Kidney (tissue), 22 donors: ENCODE measurements at regions of chr7 and their contacts with region 1.

Region 1: DNA sequence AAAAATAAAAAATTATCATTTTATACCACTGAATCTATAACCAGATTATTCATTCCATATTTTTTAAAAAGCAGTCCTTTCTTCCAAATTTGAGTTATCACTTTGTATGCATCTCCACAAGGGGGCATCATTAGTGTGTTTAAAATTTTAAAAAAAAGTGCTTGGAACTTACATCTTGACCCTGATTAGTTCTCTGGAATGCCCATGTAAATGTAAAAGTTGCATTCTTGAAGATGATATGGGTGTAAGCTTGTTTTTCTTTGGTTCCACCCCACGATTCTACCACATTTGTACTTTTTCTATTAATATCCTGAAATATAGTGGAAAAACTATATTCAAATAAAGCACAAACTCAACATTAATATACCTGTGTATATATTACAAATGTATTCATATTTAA is 144.9 kb downstream of the ELAPOR2 start:
- DNase-seq: no peak
- H3K4me3 ChIP-seq: no peak overlapping the region
- H3K27ac ChIP-seq: no peak overlapping the region
- H3K4me1 ChIP-seq: no peaks in the 10 kb centered on the region
- H3K27me3 ChIP-seq: no peaks in the 10 kb centered on the region
- CTCF ChIP-seq: no peak

Region 2: DNA sequence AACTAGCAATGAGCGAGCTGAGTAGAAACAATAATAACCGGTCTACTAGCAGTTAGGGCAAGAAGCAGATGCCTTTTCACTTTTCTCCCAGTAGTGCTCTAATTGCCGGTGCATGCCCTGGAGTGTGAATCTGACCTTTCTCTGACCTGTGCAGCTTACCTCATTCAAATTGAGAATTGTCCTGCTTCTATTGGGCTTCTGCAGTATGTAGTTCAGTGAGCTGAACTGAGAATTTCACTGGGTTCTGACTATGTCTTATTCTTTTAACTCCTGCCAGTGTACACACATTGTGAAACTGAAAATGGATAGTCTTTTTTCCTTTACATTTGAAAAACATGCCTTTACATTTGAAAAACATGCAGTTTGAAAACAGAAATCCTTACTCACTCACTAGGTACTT is 428.7 kb before region 1 on chr7:
- intact Hi-C with region 1: no loop called
- DNase-seq: no peak
- H3K4me3 ChIP-seq: no peak overlapping the region
- H3K27ac ChIP-seq: no peak overlapping the region
- H3K4me1 ChIP-seq: no peaks in the 10 kb centered on the region
- H3K27me3 ChIP-seq: no peaks in the 10 kb centered on the region
- CTCF ChIP-seq: no peak

Region 3: DNA sequence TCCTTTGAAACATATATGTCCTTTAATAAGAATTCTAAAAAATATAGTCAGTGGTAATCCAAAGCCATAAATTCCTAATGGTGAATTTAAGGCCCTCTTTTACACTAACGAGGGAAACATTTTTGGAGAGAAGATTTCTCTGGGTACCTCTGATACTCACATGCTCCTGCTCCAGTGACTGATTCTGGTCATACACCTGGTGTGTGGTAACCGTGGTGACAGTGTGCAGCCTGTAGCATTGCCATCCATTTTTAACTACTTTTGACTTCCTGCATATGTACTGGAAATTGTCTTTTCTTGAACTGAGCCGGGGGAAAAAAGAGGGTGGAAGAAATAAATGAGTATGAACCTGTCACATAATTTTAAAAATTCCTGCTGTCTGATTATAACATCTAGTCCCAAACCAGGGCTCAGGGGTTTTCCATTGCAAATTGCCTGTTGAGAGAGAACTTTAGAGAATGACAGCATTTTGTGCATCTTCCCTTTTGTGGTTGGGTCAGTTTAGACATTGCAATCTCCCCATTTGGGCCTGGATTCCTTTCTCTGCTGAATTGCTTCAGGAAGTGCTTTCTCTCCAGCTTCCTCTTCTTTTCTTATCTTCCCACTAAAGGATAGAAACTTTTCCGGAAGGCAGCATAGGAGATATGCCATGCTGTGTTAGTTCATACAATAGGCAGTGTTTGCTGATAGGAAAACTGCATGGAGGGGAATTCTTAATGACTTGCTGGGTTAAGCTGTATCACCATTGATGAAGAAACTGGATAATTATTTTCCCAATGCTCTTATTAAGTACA is 145.4 kb before region 1 on chr7:
- intact Hi-C with region 1: no loop called
- DNase-seq: no peak
- H3K4me3 ChIP-seq: no peak overlapping the region
- H3K27ac ChIP-seq: no peak overlapping the region
- H3K4me1 ChIP-seq: no peaks in the 10 kb centered on the region
- H3K27me3 ChIP-seq: no peaks in the 10 kb centered on the region
- CTCF ChIP-seq: no peak

Region 4: DNA sequence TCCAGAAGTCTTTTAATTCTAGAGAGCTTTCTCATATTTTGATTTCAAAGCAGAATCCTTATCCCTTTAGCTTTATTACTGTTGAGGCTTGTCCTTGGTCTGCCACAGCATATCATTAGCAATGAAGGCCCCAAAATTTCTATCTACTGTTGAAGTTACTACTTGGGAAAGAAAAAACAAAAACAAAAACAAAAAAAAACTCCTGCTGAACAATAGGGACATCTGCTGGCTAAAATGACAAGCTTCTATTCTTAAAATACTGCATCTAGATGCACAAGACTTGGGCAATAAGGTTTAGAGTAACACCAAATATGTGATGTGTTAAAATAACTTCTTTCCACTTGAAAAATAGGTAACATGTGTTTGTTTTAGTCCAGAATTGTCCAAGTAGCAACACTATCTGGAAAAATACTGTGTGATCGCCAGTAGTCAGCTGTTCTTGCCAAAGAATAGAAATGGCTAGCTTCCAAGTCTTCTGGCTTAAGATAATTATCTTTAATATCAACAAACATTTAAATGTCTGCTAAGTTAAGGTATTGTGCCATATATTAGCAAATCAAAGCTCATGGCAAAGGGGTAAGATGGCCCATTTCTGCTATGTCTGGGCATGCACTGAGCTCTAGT is 233.9 kb after region 1 on chr7:
- intact Hi-C with region 1: loop called (anchors 10 kb)
- DNase-seq: peak in 2 of 5 donors; percentile 17 to 27
- H3K4me3 ChIP-seq: no peak overlapping the region
- H3K27ac ChIP-seq: no peak overlapping the region
- H3K4me1 ChIP-seq: peaks cover 0 to 3% (median 0%) of the 10 kb centered on the region in 3 donors
- H3K27me3 ChIP-seq: no peaks in the 10 kb centered on the region
- CTCF ChIP-seq: peak; percentile 29